Dorsolateral prefrontal cortex (tissue), 120 donors: ENCODE measurements at regions of chr1 and their contacts with region 1.

Region 1: DNA sequence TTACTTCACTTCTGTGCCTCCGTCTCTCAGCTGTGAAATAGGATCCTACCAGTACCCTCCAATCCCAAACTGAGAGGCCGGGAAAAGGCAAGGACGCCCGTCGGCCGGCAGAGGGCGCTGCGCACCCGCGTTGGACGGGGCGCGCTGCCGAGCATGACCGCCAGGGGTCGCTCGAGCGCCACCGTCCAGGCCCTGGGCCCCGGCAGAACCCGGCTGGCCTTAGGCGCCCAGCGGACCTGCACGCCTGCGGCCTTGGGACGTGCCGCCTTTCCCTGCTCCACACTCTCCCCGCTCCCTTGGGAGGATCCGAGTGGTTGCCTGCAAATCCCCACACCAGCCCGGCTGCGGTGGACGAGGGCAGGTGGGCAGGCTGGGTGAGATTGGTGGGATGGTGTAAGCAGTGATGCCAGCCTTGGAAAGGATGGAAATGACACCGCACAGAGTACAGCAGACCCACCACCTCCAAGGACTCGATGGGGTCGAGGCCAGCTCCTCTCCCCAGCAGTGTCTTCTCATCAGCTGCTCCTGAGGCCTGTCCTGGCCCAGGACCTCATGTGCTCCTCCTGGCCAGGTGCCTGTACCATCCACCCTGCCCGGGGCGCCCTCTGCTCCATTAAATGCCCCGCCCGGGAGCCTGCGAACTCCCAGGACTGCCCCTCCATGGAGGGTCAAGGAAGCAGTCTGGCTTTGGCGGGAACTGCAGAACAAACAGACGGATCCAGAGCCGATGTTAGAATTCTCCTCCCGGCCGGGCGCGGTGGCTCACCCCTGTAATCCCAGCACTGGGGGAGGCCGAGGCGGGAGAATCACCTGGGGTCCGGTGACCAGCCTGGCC is 47.4 kb upstream of the LBR start:
- DNase-seq: peak in 7 of 10 donors; percentile 23 to 84 (median 49)
- H3K4me3 ChIP-seq: peak overlapping the region in 48 of 59 donors; percentile 7 to 59 (median 34)
- H3K27ac ChIP-seq: peak overlapping the region in 22 of 59 donors; percentile 1 to 84 (median 52)
- H3K27me3 ChIP-seq: no peaks in the 10 kb centered on the region
- CTCF ChIP-seq: peak; percentile 100

Region 2: GRCh38 chr1:225097175-225097574 is 378.0 kb before region 1 on chr1:
- intact Hi-C with region 1: no loop called
- DNase-seq: no peak
- H3K4me3 ChIP-seq: no peak overlapping the region
- H3K27ac ChIP-seq: no peak overlapping the region
- H3K27me3 ChIP-seq: no peaks in the 10 kb centered on the region
- CTCF ChIP-seq: no peak

Region 3: DNA sequence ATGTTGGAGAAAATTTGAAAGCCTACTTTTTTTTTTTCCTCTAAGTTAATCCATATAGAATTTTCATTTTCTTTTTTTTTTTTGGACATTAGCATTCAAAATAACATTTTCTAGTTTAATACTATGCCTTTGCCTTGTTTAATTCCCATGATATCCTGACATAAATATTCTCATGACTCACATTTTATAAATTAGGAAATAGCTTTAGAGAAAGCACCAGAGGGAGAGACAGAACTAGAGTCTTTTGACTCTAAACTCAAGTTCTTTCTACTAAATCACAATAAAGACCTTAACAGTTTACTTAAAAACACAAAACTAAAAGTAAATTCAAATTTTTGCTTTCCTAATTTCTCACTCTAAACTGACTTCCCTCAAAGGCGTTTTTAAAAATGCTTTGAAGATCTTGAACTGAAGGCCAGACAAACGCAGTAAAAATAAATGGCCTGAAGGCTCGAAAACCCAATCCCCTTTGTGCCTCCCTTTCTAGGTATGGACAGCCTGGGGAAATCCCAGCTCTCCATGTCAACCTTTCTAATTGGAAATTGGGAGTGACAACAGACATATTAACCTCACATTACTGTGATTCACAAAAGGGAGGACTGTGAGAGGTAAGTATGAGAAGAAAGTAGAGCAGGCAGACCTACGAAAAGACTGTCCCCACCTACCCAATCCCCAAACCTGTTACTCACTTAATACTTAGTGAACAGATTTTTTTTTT is 73.1 kb after region 1 on chr1:
- intact Hi-C with region 1: loop called (anchors 5 kb)
- DNase-seq: no peak
- H3K4me3 ChIP-seq: no peak overlapping the region
- H3K27ac ChIP-seq: peak overlapping the region in 9 of 59 donors; percentile 10 to 62 (median 41)
- H3K27me3 ChIP-seq: no peaks in the 10 kb centered on the region
- CTCF ChIP-seq: no peak

Region 4: DNA sequence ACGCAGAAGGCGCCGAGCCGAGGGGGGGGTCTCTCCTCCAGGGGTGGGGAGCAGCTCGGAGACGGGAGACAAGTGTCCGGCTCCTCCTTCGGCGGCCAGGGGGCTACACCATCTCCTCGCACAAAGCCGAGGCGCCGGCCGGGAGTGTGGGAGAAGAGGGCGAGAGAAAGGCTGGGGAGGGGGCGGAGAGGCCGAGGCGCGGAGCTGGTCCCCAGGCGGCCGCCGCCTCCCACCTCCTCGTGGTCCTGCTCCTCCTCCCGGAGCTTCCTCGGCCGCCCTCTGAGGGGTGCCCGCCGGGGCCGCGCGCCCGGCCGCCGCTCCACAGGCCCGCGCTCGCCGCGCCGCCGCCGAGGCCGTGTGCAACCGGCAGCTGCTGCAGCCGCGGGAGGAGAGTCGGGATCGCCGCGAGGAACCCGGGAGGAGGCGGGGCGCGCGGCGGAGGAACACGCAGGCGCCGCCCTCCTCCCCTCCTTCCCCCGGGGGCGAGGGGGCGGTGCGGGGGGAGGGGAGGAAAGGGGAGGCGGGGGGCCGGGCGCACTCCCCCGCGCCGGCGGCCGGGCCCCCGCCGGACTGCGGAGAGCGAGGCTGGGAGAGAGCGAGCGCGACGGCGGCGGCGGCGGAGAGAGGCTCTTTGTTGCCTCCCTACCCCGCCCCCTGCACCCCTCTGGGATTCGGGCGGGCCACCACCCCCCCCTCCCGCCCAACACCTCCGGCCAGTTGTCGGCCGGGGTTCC is 177.7 kb after region 1 on chr1 and contains the start of gene ENAH:
- intact Hi-C with region 1: loop called (anchors 1 kb)
- DNase-seq: peak; percentile 51 to 89 (median 76)
- H3K4me3 ChIP-seq: peak within 1 kb of the TSS; percentile 68 to 98 (median 90)
- H3K27ac ChIP-seq: peak within 1 kb of the TSS; percentile 84 to 100 (median 98)
- H3K27me3 ChIP-seq: no peaks in the 10 kb centered on the region
- CTCF ChIP-seq: peak in 9 of 56 donors; percentile 4 to 31 (median 11)
- total RNA-seq, gene ENAH: 57.3 to 134 (median 81.4) TPM

Region 5: DNA sequence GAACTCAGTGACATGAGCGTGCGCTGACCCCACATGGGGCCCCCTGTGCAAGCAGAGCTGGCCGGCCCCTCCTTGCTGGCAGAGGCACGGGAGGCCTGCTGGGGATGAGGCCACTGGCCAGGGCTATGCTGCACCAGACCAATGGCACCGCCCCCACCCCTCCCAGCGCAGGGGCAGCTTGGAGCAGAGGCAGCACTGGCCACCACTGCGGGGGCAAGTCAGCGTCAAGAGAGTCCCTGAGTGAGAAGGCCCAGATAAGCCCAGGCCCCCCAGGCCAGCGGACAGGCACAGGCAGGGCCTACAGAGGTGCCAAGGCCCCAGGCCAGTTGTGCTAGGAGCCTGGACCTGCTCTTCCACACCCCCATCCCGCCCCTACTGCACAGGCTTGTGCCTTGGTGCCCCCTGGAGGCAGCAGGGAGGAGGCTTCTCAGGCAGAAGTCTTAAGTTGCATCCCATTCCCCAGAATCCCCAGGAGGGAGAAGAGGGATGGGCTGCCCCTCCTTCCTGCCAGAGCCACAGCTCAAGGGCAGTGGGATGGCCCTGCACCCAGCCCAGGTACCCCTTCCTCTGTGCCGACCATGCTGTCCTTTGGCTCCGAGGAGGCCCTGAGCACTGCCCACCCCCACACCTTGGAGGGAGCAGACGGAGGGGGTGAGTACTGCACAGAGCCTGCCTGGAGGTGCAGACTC is 370.5 kb after region 1 on chr1:
- intact Hi-C with region 1: loop called in 1 of 2 experiments (anchors 10 kb)
- DNase-seq: peak in 8 of 10 donors; percentile 21 to 71 (median 48)
- H3K4me3 ChIP-seq: no peak overlapping the region
- H3K27ac ChIP-seq: peak overlapping the region in 58 of 59 donors; percentile 22 to 99 (median 93)
- H3K27me3 ChIP-seq: no peaks in the 10 kb centered on the region
- CTCF ChIP-seq: peak; percentile 24 to 78 (median 58)

Region 6: DNA sequence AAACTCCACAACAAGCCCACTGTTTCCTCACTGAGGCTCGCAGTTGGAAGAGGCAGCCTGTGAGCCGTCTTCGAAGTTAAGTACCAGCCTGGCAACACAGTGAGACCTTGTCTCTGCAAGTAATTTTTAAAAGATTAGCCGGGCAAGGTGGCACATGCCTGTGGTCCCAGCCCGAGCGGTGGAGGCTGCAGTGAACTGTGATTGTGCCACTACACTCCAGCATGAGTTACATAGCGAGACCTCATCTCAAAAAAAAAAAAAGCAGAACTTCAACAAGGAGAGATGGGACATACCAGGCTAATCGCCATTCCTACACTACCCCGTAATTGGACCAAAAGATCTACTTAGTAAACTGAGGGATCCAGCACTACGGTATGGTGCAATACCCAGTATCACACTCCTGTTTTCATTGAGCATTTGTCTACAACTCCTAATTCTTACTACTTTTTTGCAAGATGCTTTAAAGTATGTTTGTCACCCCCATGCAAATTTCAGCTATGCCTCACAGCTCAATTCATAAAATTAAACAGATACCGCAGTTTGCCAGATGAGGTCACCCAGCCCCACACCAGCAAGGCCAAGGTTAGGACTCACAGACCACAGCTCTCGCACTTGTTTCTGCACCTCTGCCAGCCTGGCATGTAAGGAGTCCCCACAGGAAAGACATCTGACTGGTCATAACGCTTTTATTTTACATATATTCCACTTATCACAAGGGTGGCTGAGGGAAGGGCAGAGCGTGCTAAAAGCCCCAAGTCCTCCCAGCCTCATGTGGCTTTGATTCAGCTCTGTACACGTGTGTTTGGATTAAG is 502.9 kb after region 1 on chr1:
- intact Hi-C with region 1: loop called (anchors 1 to 2 kb)
- DNase-seq: no peak
- H3K4me3 ChIP-seq: no peak overlapping the region
- H3K27ac ChIP-seq: no peak overlapping the region
- H3K27me3 ChIP-seq: no peaks in the 10 kb centered on the region
- CTCF ChIP-seq: no peak